K562 (cell line): ENCODE measurements at regions of chr1 and their contacts with region 1.

Region 1: DNA sequence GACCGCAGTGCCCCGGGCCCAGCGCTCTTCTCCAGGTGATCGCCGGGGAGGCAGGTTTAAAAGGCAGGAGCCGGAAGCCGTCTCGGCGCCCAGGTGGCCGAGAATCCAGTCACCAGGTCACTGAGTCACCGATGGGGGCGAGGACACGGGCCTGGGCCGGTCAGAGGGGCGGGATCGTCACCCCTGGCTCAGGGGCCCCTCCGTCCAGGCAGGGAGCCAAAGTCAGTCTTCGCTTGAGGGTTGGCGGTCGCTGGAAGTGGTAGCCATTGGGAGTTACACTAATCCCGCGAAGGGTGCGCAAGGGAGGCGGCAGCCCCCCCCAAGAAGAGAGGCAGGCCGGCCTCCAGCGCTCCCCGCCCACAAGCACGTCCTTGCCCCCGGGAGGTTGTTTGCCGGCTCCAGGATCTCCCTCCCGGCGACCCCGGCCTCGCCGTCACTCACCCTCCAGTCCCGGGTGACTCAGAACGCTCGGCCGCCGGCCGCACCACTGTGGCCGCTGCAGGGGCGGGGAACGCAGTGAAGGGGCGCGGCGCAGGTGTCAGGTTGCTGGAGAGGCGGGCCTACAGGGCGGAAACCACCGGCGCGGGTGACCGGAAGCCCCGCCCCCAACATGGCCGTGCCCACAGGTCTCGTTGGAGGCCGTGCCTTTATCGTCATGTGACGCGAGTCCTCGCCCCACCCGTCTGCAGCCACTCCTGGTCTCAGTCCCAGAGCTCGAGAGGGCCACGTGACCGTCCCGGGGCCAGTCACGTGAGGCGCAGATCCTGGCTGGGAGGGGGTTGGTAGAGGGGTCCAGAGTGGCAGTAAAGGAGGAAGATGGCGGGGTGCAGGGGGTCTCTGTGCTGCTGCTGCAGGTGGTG is at the starts of genes CLCN6 and MTHFR:
- DNase-seq: peak; percentile 97 to 100 (median 98)
- ATAC-seq: peak; percentile 84
- H3K4me3 ChIP-seq: peak within 1 kb of the TSS; percentile 81
- H3K27ac ChIP-seq: peak within 1 kb of the TSS; percentile 98
- H3K4me1 ChIP-seq: peaks cover 34 to 40% of the 10 kb centered on the region in 2 experiments
- H3K27me3 ChIP-seq: no peaks in the 10 kb centered on the region
- CTCF ChIP-seq: peak in 1 of 3 experiments; percentile 5; a peak in 1 of 6 replicates
- EP300 ChIP-seq: peak; percentile 79
- POLR2A ChIP-seq: peak; percentile 94
- RAD21 ChIP-seq: peak; percentile 5 to 14; a peak in 2 of 4 replicates
- polyA plus RNA-seq, gene CLCN6: 2.0 to 3.1 TPM
- polyA plus RNA-seq, gene MTHFR: 5.0 to 5.4 TPM

Region 2: DNA sequence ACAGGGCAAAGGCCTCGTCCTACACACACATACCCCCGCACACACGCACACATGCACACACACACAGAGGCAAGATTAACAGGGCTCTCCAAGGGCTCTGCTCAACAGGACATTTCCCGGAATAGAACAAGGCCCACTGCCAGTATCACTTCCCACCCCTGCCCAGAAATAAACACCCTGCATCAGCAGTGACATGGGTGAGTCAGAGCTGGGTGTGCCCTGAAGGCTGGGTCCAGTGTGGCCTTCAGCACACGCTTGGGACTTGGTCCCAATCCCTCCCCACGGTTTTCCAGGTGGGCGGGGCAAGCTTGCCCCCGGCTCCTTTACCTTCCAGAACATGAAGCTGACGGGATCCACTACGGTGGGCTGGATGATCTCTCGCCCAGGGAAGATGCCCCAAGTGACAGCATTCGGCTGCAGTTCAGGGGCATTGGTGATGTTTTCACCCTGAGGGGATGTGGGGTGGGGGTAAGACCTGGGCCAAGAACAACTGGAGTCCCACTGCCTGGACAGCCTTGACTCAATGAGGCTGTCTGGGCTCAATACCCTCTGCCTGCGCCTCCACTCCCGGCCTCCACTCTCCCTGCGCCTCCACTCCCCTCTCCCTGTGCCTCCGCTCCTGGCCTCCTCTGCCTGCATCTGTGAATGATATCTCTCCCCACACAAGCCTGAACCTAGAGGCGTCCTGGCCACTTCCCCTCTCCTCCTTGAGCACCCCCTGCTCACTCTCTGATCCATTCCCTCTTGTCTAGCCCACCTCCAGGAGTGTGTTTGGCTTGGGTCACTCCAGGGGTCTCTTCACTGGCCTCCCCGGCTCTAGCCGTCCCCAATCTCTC is 14.6 kb before region 1 on chr1:
- CTCF ChIA-PET with region 1: no interaction called
- POLR2A ChIA-PET with region 1: interaction called, 75 read pairs
- in situ Hi-C with region 1: no loop called
- intact Hi-C with region 1: no loop called
- DNase-seq: peak; percentile 71 to 83 (median 74)
- ATAC-seq: peak; percentile 9
- H3K4me3 ChIP-seq: no peak overlapping the region
- H3K27ac ChIP-seq: peak overlapping the region; percentile 73
- H3K4me1 ChIP-seq: peaks cover 70 to 91% of the 10 kb centered on the region in 2 experiments
- H3K27me3 ChIP-seq: no peaks in the 10 kb centered on the region
- CTCF ChIP-seq: no peak
- EP300 ChIP-seq: peak; percentile 57; the same call in 1 of the 2 replicates
- POLR2A ChIP-seq: 0 out of 2 replicates have a peak, but pooled peaks have one; percentile 34
- RAD21 ChIP-seq: peak in 1 of 2 experiments; percentile 17; a peak in 1 of 4 replicates

Region 3: GRCh38 chr1:11831945-11832725 is 26.5 kb after region 1 on chr1:
- CTCF ChIA-PET with region 1: no interaction called
- POLR2A ChIA-PET with region 1: interaction called, 11 read pairs
- in situ Hi-C with region 1: no loop called
- intact Hi-C with region 1: no loop called
- DNase-seq: peak in 1 of 4 experiments; percentile 23
- ATAC-seq: peak; percentile 37
- H3K4me3 ChIP-seq: no peak overlapping the region
- H3K27ac ChIP-seq: no peak overlapping the region
- H3K4me1 ChIP-seq: peaks cover 3 to 7% of the 10 kb centered on the region in 2 experiments; a peak in 1 of 5 replicates
- H3K27me3 ChIP-seq: no peaks in the 10 kb centered on the region
- CTCF ChIP-seq: no peak
- EP300 ChIP-seq: no peak
- POLR2A ChIP-seq: no peak
- RAD21 ChIP-seq: no peak